GM13976 (cell line): ENCODE measurements at regions of chr1 and their contacts with region 1.

Region 1: GRCh38 chr1:18902523-18903290 is at the start of gene ALDH4A1:
- DNase-seq: peak; percentile 99
- CTCF ChIP-seq: no peak

Region 2: GRCh38 chr1:18769140-18769539 is 133.6 kb before region 1 on chr1:
- in situ Hi-C with region 1: no loop called
- DNase-seq: no peak
- CTCF ChIP-seq: no peak

Region 3: DNA sequence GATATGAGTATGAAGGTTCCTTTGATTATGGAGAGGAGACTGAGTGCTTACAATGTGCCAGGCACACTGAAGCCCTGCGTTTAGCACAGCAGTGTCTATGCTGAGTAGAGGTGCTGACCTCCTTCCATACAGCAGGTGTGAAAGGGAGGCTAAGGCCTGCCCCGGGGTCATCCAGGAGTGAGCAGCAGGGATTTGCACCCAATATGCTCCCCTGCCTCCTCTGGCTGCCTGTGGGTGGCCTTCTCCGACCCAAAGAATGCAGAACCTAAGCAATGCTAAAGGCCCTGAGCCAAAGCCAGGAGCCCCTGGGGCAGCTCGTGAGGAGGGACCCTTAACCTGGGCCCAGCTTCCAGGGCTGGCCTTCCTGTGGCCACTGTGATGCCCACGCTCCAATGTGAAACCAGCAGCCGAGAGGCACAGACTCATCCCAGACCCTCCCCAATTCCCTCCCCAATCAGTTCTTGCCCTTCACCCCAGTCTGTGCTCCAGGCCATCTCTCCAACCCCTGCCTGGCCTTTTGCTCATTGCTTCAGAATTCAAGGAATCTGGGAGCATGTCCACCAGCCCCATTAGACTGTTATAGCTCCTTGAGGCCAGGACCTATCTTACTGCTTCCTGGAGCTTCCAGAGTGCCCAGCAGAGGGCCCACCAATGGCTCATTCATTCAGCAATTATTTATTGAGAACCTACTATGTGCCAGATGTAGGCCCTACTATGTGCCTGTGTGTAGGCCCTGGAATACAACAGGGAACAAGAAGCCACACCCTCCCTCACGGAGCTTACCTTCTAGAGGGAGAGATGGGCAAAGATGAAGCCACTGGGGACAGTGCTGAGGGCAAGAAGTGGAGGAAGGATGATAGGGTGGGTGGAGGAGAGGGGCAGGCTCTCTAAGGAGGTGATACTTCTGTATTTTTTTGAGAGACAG is 96.5 kb before region 1 on chr1:
- in situ Hi-C with region 1: no loop called
- DNase-seq: no peak
- CTCF ChIP-seq: no peak

Region 4: DNA sequence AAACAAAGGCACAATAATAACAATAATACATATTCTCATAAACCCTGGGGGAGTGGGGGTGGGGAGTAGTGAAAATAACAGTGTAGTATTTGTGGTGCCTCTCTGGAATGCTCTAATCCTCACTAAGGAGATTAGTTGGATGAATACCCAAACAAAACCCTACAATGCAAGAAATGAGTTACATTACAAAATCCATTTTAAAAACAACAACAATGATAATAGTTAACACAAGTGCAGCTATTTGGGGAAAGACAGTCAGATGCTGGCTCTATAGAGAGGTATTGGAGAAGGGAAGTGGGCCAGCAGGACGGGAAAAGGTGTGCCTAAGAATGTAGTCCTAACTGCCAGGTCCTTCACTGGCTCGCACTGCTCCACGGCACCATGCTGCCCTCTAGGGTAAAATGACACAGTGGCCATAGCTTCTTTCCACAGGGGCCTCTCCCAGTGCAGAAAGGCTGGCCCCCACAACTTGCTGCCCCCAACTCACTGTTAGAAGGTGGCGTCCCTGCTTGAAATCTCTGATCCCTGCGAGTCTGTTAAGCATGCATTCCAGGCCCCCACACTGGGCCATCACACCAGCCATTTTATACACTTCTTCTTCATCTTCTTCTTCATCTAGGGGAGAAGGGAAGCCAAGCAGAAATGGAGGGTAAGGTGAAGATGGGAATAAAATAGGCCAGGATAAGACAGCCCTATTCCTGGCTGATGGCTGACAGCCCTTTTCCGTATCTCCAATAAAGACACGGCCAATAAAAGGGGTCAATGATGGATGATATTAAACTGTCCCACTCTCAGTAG is 193.5 kb after region 1 on chr1:
- in situ Hi-C with region 1: loop called (anchors 25 kb)
- DNase-seq: no peak
- CTCF ChIP-seq: no peak